Posterior cingulate gyrus (tissue), 11 donors: ENCODE measurements at regions of chr22 and their contacts with region 1.

Region 1: DNA sequence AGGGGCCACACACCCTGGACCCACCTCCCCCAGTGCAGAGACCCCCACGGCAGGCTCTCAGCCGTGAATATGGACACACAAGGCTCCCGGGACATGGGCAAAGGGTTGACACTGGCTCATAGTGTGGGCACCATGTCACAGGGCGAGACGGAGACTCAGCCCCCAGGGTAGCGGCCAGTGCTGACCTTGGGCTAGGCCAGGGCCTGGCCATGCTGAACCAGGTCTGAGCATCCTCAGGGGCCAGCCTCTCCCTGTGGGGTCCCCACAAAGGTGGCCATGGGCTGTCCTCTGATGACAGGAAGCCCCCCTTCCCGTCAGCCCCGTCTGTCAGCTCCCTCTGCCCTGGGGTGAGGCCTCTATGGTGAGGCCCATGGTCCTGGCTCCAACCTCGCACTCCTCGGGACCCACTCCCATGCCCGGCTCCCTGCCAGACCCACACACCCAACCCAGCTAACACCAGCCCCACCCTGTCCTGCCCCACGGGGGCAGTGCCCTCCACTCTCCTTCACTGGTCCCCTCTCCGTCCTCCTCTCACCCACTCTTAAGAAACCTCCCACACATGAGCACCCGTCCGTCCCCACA is 19.0 kb upstream of the PRODH start:
- DNase-seq: peak in 6 of 10 donors; percentile 4 to 80 (median 36)

Region 2: DNA sequence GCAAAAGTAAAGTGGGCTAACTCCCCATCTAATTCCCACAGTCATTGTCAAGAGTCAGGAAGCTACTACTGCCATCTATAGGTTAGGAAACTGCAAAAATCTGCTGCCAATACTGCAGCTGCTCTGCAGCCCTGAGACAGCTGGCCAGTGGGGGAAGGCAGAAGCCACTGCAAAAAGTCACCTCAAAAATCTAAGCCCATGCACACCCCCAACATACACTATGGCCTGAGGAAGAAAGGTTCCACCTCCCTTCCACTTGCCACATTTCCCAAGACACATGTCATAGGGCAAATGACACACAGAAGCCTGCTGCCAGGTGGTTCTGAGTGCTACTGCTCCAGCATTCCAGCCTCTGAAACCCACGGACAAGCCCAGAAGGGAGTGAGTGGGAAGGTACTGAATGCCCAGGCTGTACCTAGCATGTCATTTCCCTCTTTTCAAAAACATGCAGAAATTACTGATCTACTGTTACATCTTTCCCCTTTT is 130.2 kb after region 1 on chr22:
- intact Hi-C with region 1: loop called (anchors 10 kb)
- DNase-seq: no peak

Region 3: DNA sequence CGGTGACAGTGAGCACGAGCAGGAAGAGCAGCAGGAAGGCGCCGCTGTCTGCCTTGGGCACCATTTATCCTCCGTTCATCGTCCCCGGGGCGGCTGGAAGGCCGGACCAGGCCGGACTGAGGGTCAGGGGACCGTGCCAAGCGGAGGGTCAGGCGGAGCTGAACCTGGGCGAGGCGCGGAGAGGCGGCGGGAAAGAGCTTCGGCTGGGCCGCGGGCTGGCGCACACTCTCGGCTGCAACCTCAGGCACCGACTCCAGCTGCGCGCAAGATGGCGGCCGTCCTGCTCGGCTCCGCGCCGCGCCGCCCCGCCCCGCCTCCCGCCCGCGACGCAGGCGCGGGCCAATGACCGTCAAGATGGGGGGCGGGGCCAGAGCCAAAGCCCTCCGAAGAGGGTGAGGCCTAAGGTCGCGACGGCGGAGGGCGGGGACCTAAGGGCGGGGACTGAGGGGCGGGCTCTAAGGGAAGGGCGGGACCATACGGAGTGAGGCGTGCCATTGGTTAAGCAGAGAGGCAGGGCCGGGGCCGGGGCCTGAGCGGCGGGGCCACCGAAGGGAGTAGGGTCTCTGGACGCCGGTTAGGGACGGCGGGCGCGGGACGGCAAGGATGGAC is 167.2 kb after region 1 on chr22 and contains the start of gene DGCR2:
- intact Hi-C with region 1: no loop called
- DNase-seq: peak; percentile 93 to 99 (median 98)

Region 4: DNA sequence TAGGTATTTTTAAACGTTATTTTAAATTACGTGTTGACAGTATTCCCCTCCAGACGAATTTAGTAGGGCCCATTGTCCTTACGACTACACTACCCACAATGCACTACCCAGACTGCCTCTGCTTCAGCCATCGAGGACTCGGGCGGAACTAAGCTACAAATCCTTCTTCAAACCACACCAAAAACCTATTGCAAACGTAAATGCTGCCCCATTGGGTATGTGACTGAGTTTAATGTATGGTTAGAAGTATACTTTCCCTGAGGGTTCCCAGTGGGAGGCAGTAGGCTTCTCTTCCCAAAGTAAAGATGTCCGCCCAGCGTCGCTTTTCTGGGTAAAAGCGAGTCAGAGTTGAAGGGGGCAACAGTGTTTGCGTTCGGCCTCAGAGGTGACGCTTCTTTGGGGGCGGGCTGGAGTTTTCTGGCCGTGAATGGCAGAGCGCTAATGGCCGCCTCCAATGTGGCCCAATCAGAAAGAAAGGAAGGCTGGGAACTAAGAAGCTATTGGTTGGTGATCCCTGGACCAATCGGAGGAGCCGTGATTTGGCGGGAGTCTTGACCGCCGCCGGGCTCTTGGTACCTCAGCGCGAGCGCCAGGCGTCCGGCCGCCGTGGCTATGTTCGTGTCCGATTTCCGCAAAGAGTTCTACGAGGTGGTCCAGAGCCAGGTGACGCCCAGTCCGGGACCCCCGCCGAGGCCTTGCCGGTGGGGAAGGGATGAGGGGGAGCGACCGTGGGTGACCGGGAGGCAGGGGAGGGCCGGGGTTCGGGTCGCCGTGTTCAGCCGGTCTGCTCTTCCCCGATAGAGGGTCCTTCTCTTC is 524.5 kb after region 1 on chr22 and contains the start of gene CDC45:
- intact Hi-C with region 1: loop called (anchors 10 kb)
- DNase-seq: peak; percentile 93 to 99 (median 96)

Region 5: DNA sequence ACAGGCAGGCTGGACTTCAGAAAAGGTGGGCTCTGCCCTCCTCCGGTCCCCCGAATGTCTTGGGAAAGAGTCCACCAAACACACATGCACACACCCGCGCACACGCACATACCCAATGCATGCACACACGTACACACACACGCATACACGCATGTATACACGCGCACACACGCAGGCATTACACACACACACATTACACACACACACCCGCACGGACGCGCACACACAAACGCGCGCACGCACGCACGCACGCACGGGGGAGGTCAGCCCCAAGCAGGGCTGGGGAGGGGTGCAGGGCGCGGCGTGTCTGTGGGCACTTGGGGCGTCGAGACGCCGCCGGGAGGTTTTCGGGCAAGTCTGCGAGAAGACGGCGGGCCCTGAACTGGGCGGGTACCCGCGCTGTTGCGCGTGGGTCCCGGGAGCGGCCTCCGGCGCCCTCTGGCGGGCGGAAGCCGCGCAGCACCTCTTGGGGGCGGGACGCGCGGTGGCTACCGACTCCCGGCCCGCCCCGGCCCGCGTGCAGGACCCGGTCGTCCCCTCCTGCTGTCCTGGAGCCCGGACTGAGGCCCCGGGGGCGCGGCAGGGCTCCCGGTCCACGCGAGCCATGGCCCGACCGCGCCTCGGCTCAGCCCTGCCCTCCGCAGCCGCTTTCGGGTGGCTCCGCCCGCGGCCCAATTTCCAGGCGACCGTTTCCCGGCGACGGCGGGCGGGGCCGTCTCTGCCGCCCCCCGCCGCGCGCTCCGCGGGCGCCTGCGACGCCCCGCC is 762.8 kb after region 1 on chr22:
- intact Hi-C with region 1: loop called (anchors 10 kb)
- DNase-seq: peak; percentile 61 to 96 (median 74)